Common myeloid progenitor, CD34-positive (primary cell): ENCODE measurements at regions of chr1 and their contacts with region 1.

Region 1: DNA sequence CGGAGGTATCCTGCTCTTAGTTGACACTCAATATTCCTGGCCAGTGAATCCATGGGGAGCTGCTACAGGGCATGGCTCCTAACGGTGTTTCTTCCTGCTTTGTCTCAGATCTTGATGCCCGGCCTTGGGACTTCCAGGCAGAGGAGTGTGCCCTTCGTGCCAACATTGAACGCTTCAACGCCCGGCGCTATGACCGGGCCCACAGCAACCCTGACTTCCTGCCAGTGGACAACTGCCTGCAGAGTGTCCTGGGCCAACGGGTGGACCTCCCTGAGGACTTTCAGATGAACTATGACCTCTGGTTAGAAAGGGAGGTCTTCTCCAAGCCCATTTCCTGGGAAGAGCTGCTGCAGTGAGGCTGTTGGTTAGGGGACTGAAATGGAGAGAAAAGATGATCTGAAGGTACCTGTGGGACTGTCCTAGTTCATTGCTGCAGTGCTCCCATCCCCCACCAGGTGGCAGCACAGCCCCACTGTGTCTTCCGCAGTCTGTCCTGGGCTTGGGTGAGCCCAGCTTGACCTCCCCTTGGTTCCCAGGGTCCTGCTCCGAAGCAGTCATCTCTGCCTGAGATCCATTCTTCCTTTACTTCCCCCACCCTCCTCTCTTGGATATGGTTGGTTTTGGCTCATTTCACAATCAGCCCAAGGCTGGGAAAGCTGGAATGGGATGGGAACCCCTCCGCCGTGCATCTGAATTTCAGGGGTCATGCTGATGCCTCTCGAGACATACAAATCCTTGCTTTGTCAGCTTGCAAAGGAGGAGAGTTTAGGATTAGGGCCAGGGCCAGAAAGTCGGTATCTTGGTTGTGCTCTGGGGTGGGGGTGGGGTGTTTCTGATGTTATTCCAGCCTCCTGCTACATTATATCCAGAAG is 16.7 kb downstream of the ALX3 start:
- DNase-seq: peak in 2 of 3 donors; percentile 40 to 56
- H3K4me3 ChIP-seq: no peak overlapping the region
- H3K27ac ChIP-seq: no peak overlapping the region
- H3K4me1 ChIP-seq: no peaks in the 10 kb centered on the region
- H3K27me3 ChIP-seq: no peaks in the 10 kb centered on the region

Region 2: GRCh38 chr1:110034451-110035235 is 19.1 kb before region 1 on chr1 and contains the start of gene STRIP1:
- CTCF ChIA-PET with region 1: interaction called, 158 read pairs
- POLR2A ChIA-PET with region 1: interaction called, 3 read pairs
- DNase-seq: peak; percentile 98
- H3K4me3 ChIP-seq: peak within 1 kb of the TSS; percentile 69 to 96 (median 87)
- H3K27ac ChIP-seq: peak within 1 kb of the TSS; percentile 87 to 96
- H3K4me1 ChIP-seq: peaks cover 15 to 30% (median 18%) of the 10 kb centered on the region in 4 experiments
- H3K27me3 ChIP-seq: no peaks in the 10 kb centered on the region

Region 3: GRCh38 chr1:110067893-110068645 is 14.3 kb after region 1 on chr1:
- CTCF ChIA-PET with region 1: interaction called, 41 read pairs
- POLR2A ChIA-PET with region 1: interaction called, 5 read pairs
- DNase-seq: peak in 2 of 3 donors; percentile 40 to 57
- H3K4me3 ChIP-seq: peak overlapping the region in 5 of 7 experiments; percentile 16 to 42 (median 38)
- H3K27ac ChIP-seq: no peak overlapping the region
- H3K4me1 ChIP-seq: peaks cover 0 to 36% (median 22%) of the 10 kb centered on the region in 4 experiments
- H3K27me3 ChIP-seq: peaks cover 4 to 81% (median 51%) of the 10 kb centered on the region in 5 experiments

Region 4: DNA sequence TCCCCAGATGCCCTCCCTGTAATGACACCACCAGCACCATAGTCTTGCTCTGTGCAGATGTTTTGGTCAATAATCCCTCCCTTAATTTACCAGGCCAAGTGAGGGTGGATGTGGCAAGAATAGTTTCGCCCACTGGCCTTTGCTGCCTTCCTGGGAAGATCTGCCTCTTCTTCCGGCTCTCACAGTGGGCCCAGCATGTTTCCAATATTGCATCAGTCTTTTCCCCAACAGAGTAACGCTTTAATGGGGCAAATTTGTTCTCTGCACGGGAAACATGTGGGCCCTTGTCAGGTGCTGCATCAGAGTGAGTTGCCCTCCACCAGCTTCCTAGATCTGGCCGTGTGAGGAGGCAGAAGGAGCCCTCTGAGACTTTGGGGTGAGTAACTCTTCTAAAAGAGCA is 28.7 kb after region 1 on chr1:
- CTCF ChIA-PET with region 1: interaction called, 16 read pairs
- POLR2A ChIA-PET with region 1: no interaction called
- DNase-seq: no peak
- H3K4me3 ChIP-seq: no peak overlapping the region
- H3K27ac ChIP-seq: no peak overlapping the region
- H3K4me1 ChIP-seq: peaks cover 0 to 20% (median 16%) of the 10 kb centered on the region in 4 experiments
- H3K27me3 ChIP-seq: peaks cover 12 to 66% (median 51%) of the 10 kb centered on the region in 5 experiments

Region 5: DNA sequence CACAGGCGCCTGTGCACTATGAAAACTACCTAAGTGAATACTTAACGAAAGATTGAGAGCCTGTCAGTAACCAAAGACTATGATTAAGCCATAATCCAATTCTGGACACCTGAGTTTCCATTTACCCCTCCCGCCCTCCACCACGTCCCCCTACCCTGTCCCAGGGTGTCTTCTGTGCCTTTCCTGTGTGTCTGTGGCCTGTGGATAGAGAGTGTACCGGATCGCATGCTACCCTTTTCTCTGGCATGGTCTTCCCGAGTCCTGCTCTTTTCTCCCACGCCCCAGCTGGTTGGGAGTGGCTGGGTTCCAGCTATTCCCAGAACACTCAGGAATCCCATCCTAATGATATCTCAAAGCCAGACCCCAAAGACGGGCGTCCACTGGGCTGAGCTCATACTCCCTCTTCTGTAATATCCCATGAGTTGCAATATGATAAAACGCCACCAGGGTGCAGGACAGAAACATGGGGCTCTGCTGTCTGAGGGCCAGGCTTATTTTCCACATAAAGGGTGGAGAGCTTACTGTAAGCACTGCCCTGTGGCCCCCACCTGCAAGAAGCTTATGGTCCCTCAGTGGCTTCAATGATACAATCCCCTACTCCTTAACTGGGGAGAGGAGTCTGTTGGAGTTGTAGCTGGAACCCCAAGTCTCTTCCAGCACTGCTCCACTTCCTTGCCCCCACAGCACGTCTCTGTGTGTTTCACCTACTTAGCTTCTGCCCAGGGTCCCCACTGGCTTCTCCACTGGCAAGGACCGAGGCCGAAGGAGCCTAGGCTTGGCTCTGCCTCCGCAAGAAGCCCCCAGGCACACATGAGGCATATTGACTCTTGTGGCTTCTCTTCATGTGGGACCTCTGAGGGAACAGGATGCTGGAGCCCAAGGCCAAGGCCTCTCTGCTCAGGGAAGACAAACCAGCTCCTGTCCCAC is 34.3 kb after region 1 on chr1:
- CTCF ChIA-PET with region 1: interaction called, 31 read pairs
- POLR2A ChIA-PET with region 1: no interaction called
- DNase-seq: peak; percentile 54 to 74 (median 62)
- H3K4me3 ChIP-seq: no peak overlapping the region
- H3K27ac ChIP-seq: no peak overlapping the region
- H3K4me1 ChIP-seq: peaks cover 0 to 26% (median 20%) of the 10 kb centered on the region in 4 experiments
- H3K27me3 ChIP-seq: peaks cover 7 to 41% (median 26%) of the 10 kb centered on the region in 5 experiments

Region 6: DNA sequence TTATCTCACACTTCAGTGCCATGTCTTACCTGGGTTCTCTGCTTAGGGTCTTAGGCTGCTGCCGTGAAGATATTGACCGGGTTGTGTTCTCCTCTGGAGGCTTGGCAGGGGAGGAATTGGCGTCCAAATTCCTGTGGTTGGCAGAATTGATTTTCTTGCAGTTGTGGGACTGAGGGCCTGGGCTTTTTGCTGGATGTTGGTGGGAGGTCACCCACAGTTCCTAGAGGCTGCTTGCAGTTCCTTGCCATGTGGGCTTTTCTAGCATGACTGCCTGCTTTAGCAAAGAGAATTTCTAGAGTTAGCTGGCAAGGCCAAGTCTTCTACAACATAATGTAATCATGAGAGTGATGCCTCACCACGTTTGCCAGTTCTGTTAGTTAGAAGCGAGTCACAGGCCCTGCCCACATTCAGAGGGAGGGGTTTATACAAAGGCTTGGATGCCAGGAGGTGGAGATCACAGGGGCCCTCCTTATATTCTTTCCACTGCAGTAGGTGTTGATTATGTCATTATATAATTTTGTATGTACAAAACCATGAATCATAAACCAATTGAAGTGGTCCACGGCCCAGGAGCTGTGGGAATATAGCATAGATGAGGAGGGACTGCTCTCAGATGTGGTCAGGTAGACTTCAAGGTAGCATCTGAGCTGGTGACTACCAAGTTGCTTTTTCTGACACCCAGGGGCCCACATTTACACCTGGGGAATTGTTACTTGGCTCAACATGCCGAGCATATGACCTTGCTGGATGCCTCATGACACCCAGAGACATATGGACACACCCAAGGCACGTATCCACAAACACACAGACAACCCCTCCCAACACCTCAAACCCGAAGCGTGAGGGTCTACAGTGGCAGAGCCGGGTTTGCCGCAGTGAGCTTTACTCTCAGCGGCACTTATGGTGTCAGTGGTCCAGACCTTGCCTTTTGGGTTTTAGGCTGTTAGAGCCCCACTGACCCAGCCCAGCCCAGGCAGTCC is 65.1 kb after region 1 on chr1:
- CTCF ChIA-PET with region 1: interaction called, 81 read pairs
- POLR2A ChIA-PET with region 1: no interaction called
- DNase-seq: no peak
- H3K4me3 ChIP-seq: no peak overlapping the region
- H3K27ac ChIP-seq: no peak overlapping the region
- H3K4me1 ChIP-seq: no peaks in the 10 kb centered on the region
- H3K27me3 ChIP-seq: peaks cover 0 to 11% (median 4%) of the 10 kb centered on the region in 5 experiments

Region 7: DNA sequence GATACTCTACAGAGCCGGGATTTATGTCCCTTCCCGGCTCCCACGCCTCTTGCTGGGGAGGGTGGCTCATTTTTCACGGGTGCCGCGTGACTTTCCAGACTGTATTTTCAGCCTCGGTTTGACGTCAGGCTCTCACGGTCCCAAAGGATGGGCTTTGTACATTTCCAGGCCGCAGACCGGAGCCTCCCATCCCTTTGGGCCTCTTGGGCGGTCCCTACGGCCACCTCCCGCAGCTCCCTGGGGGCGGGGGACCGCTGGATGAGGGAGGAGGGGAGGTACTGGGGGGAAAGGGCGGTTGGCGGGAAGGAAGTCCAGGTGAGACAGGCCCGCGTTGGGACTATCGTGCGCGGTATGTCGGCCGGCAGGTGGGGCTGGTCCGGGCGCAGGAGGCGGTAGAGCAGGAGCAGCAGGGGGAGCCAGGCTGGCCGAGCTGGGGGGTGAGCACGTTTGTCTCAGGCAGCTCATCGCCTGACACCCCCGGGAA is 76.4 kb after region 1 on chr1:
- CTCF ChIA-PET with region 1: no interaction called
- POLR2A ChIA-PET with region 1: no interaction called
- DNase-seq: peak in 1 of 3 donors; percentile 20
- H3K4me3 ChIP-seq: no peak overlapping the region
- H3K27ac ChIP-seq: no peak overlapping the region
- H3K4me1 ChIP-seq: peaks cover 0 to 10% (median 2%) of the 10 kb centered on the region in 4 experiments
- H3K27me3 ChIP-seq: peaks cover 0 to 45% (median 24%) of the 10 kb centered on the region in 5 experiments